ENCODE measurements at regions of chr2 and their contacts with region 1.

Region 1: GRCh38 chr2:24049485-24050021 is at the start of gene FKBP1B:
- ATAC-seq: peak; percentile 5 to 48 (median 37)
- H3K4me3 ChIP-seq: peak within 1 kb of the TSS; percentile 71 to 81 (median 79)
- H3K27ac ChIP-seq: peak within 1 kb of the TSS; percentile 51 to 60
- H3K4me1 ChIP-seq: peaks cover 10 to 18% of the 10 kb centered on the region in 2 donors
- total RNA-seq, gene FKBP1B: 4.2 to 54.0 (median 32.4) TPM

Region 2: DNA sequence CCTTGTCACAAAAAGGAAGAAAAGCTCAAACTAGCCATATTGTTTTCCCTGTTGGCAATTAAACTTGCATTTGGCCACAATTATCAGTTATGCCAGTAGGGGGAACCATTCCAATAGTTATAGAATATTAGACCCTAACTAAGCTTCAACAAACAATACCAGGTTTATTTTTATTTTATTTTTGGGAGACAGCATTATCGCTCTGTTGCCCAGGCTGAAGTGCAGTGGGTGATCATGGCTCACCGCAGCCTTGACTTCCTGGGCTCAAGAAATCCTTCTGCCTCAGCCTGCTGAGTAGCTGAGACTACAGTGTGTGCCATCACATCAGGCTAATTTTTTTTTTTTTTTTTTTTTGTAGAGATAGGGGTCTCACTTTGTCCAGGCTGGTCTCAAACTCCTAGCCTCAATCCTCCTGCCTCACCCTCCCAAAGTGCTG is 224.8 kb before region 1 on chr2:
- in situ Hi-C with region 1: no loop called
- ATAC-seq: peak in 6 of 8 experiments; percentile 32 to 77 (median 46)
- H3K4me3 ChIP-seq: no peak overlapping the region
- H3K27ac ChIP-seq: no peak overlapping the region
- H3K4me1 ChIP-seq: no peaks in the 10 kb centered on the region

Region 3: GRCh38 chr2:23916727-23917405 is 132.7 kb before region 1 on chr2:
- in situ Hi-C with region 1: no loop called
- ATAC-seq: no peak
- H3K4me3 ChIP-seq: no peak overlapping the region
- H3K27ac ChIP-seq: no peak overlapping the region
- H3K4me1 ChIP-seq: no peaks in the 10 kb centered on the region

Region 4: GRCh38 chr2:23926750-23927571 is 122.6 kb before region 1 on chr2 and contains the start of gene ATAD2B:
- in situ Hi-C with region 1: loop called in 1 of 9 experiments (anchors 25 kb)
- ATAC-seq: peak; percentile 82 to 93 (median 90)
- H3K4me3 ChIP-seq: peak within 1 kb of the TSS; percentile 61 to 95 (median 74)
- H3K27ac ChIP-seq: peak within 1 kb of the TSS; percentile 93 to 96
- H3K4me1 ChIP-seq: peaks cover 3 to 18% of the 10 kb centered on the region in 2 donors
- total RNA-seq, gene ATAD2B: 10.8 to 27.0 (median 20.3) TPM

Region 5: DNA sequence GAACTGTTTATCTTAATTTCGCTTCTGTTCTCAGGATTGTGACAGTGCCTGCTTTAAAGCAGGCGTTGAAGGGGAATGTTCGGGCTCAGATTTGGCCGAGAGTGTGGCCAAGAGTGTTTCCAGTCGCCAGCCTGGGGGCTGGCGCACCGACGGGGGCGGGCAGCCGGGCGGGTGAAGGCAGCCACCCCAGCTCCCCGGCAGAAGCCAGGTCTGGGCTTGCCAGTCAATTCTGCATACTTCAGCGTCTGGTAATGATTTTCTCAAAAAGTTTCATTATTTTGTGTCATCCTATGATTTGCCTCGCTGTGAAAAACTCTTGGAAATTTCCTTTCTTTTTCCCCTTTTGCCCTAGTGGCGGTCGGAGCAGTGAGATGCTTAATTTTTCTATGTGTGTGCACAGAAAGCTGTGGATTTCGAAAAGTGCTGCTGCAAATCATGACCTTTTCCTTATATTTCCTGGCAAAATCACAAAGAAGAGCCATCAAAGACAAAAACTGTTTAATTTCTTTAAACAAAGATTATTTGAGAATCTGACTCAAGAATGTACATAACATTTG is 126.2 kb after region 1 on chr2:
- in situ Hi-C with region 1: no loop called
- ATAC-seq: peak in 2 of 8 experiments; percentile 30 to 64
- H3K4me3 ChIP-seq: no peak overlapping the region
- H3K27ac ChIP-seq: no peak overlapping the region
- H3K4me1 ChIP-seq: no peaks in the 10 kb centered on the region